ENCODE measurements at regions of chr2 and their contacts with region 1.

Region 1: DNA sequence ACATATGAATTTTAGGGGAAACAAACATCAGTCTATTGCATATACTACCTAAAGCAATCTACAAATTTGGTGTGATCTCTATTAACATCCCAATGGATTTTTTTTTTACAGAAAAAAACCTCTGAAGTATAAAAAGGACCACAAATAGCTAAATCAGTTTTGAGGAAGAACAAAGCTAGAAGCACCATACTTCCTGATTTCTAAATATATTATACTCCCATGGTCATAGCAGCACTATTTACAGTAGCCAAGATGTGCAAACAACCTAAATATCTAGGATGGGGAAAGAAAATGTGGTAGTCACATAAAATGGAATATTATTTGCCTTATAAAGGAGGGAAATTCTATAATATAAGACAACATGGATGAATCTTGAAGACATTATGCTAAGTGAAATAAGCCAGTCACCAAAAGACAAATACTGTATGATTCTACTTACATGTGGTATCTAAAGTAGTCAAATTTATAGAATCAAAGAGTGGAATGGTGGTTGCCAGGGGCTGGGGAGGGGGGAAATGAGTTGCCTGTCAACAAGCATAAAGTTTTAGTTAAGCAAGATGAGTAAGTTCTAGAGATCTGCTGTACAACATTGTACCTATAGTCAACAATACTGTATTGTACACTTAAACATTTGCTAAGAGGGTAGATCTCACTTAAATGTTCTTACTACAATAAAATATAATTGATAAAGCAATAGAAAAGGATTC is 17.6 kb upstream of the CASP8 start:
- DNase-seq: no peak
- ATAC-seq: no peak
- H3K4me3 ChIP-seq: no peak overlapping the region
- H3K27ac ChIP-seq: no peak overlapping the region
- H3K4me1 ChIP-seq: no peaks in the 10 kb centered on the region
- H3K27me3 ChIP-seq: no peaks in the 10 kb centered on the region
- CTCF ChIP-seq: no peak
- POLR2A ChIP-seq: no peak

Region 2: GRCh38 chr2:201313362-201313761 is 70.6 kb after region 1 on chr2:
- in situ Hi-C with region 1: no loop called
- intact Hi-C with region 1: no loop called
- DNase-seq: no peak
- ATAC-seq: no peak
- H3K4me3 ChIP-seq: no peak overlapping the region
- H3K27ac ChIP-seq: no peak overlapping the region
- H3K4me1 ChIP-seq: no peaks in the 10 kb centered on the region
- H3K27me3 ChIP-seq: no peaks in the 10 kb centered on the region
- CTCF ChIP-seq: no peak
- POLR2A ChIP-seq: no peak

Region 3: GRCh38 chr2:201363857-201364560 is 121.3 kb after region 1 on chr2:
- in situ Hi-C with region 1: loop called in 3 of 4 experiments (anchors 5 to 25 kb)
- intact Hi-C with region 1: no loop called
- DNase-seq: no peak
- ATAC-seq: peak; percentile 39 to 74
- H3K4me3 ChIP-seq: no peak overlapping the region
- H3K27ac ChIP-seq: no peak overlapping the region
- H3K4me1 ChIP-seq: no peaks in the 10 kb centered on the region
- H3K27me3 ChIP-seq: no peaks in the 10 kb centered on the region
- CTCF ChIP-seq: peak in 4 of 5 experiments; percentile 56 to 73 (median 61)
- POLR2A ChIP-seq: no peak